AG04450 (cell line): ENCODE measurements at regions of chr14 and their contacts with region 1.

Region 1: GRCh38 chr14:73886449-73887317 is at the start of gene ZNF410:
- DNase-seq: peak; percentile 94
- H3K4me3 ChIP-seq: peak within 1 kb of the TSS; percentile 90
- H3K27ac ChIP-seq: peak within 1 kb of the TSS; percentile 95
- H3K27me3 ChIP-seq: no peaks in the 10 kb centered on the region
- CTCF ChIP-seq: no peak
- polyA plus RNA-seq, gene ZNF410: 54.5 and 55.3 TPM in 2 replicates

Region 2: GRCh38 chr14:73851644-73852382 is 34.9 kb before region 1 on chr14 and contains the start of gene PTGR2:
- CTCF ChIA-PET with region 1: no interaction called
- POLR2A ChIA-PET with region 1: interaction called, 13 read pairs
- DNase-seq: peak; percentile 94
- H3K4me3 ChIP-seq: peak within 1 kb of the TSS; percentile 70
- H3K27ac ChIP-seq: peak within 1 kb of the TSS; percentile 87
- H3K27me3 ChIP-seq: no peaks in the 10 kb centered on the region
- CTCF ChIP-seq: peak; percentile 18; the same call in 1 of the 2 replicates
- polyA plus RNA-seq, gene PTGR2: 4.5 and 6.9 TPM in 2 replicates

Region 3: DNA sequence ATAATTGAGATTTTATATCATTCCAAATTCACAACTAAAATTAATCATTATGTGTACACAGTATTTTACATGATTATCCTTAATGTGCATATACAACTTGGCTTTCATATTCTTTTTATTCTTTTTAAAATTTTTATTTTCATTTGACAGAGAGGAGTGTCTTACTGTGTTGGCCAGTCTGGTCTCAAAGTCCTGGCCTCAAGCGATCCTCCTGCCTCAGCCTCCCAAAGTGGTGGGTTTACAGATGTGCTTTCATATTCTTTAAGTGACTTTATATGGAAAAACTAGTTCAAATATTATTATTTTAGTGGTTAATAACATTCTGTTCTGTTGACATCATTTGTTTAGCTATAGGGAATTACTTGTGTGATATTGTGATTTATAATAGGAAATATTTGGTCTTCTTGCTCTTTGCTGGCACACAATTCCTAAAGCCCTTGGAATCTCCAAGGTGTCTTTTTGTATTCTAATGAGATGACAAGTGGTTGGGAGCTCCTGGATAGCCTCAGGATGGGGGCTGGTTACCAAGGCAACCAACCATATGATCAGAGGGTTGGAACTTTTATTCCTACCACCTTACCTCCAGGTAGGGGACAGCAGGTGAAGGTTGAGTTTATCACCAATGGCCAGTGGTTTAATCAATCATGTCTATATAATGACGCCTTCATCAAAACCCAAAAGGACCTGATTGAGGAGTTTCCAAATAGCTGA is 16.0 kb before region 1 on chr14:
- CTCF ChIA-PET with region 1: no interaction called
- POLR2A ChIA-PET with region 1: no interaction called
- DNase-seq: no peak
- H3K4me3 ChIP-seq: no peak overlapping the region
- H3K27ac ChIP-seq: no peak overlapping the region
- H3K27me3 ChIP-seq: no peaks in the 10 kb centered on the region
- CTCF ChIP-seq: no peak